CD4-positive, alpha-beta T cell (primary cell): ENCODE measurements at regions of chr15 and their contacts with region 1.

Region 1: GRCh38 chr15:64893481-64894394 is 18.0 kb upstream of the ANKDD1A start:
- DNase-seq: peak; percentile 85 to 98 (median 95)
- ATAC-seq: peak; percentile 65
- H3K4me3 ChIP-seq: peak overlapping the region; percentile 58
- H3K4me3 Mint-ChIP-seq: peak overlapping the region; percentile 86
- H3K27ac ChIP-seq: peak overlapping the region; percentile 97
- H3K27ac Mint-ChIP-seq: peak overlapping the region; percentile 100
- H3K4me1 ChIP-seq: peaks cover 70% of the 10 kb centered on the region
- H3K4me1 Mint-ChIP-seq: peaks cover 62% of the 10 kb centered on the region
- H3K27me3 ChIP-seq: no peaks in the 10 kb centered on the region
- H3K27me3 Mint-ChIP-seq: no peaks in the 10 kb centered on the region
- CTCF ChIP-seq: no peak

Region 2: GRCh38 chr15:64430000-64430735 is 463.6 kb before region 1 on chr15:
- CTCF ChIA-PET with region 1: no interaction called
- POLR2A ChIA-PET with region 1: no interaction called
- intact Hi-C with region 1: loop called in 1 of 2 experiments (anchors 10 kb)
- DNase-seq: peak in 13 of 14 experiments; percentile 17 to 85 (median 37)
- ATAC-seq: peak; percentile 91
- H3K4me3 ChIP-seq: peak overlapping the region; percentile 12
- H3K4me3 Mint-ChIP-seq: peak overlapping the region; percentile 79
- H3K27ac ChIP-seq: peak overlapping the region; percentile 31 to 52
- H3K27ac Mint-ChIP-seq: peak overlapping the region; percentile 97
- H3K4me1 ChIP-seq: peaks cover 36% of the 10 kb centered on the region
- H3K4me1 Mint-ChIP-seq: peaks cover 52% of the 10 kb centered on the region
- H3K27me3 ChIP-seq: no peaks in the 10 kb centered on the region
- H3K27me3 Mint-ChIP-seq: no peaks in the 10 kb centered on the region
- CTCF ChIP-seq: no peak

Region 3: DNA sequence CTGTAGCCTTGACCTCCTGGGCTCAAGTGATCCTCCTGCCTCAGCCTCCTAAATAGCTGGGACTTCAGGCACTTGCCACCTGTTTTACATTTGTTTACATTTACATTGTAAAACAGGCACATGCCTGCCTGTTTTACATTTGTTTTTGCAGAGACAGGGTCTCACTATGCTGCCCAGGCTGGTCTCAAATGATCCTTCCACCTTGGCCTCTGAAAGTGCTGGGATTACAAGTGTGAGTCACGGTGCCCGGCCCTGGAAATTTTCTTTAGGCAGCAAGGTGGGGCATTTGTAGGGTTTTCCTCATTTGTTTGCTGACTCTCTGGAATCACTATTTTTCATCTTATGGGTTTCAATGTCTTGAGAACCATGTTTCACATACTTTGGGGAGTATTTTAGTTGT is 93.3 kb before region 1 on chr15:
- CTCF ChIA-PET with region 1: no interaction called
- POLR2A ChIA-PET with region 1: no interaction called
- intact Hi-C with region 1: no loop called
- DNase-seq: no peak
- ATAC-seq: no peak
- H3K4me3 ChIP-seq: no peak overlapping the region
- H3K4me3 Mint-ChIP-seq: no peak overlapping the region
- H3K27ac ChIP-seq: no peak overlapping the region
- H3K27ac Mint-ChIP-seq: no peak overlapping the region
- H3K4me1 ChIP-seq: peaks cover 5% of the 10 kb centered on the region
- H3K4me1 Mint-ChIP-seq: no peaks in the 10 kb centered on the region
- H3K27me3 ChIP-seq: no peaks in the 10 kb centered on the region
- H3K27me3 Mint-ChIP-seq: no peaks in the 10 kb centered on the region
- CTCF ChIP-seq: no peak

Region 4: DNA sequence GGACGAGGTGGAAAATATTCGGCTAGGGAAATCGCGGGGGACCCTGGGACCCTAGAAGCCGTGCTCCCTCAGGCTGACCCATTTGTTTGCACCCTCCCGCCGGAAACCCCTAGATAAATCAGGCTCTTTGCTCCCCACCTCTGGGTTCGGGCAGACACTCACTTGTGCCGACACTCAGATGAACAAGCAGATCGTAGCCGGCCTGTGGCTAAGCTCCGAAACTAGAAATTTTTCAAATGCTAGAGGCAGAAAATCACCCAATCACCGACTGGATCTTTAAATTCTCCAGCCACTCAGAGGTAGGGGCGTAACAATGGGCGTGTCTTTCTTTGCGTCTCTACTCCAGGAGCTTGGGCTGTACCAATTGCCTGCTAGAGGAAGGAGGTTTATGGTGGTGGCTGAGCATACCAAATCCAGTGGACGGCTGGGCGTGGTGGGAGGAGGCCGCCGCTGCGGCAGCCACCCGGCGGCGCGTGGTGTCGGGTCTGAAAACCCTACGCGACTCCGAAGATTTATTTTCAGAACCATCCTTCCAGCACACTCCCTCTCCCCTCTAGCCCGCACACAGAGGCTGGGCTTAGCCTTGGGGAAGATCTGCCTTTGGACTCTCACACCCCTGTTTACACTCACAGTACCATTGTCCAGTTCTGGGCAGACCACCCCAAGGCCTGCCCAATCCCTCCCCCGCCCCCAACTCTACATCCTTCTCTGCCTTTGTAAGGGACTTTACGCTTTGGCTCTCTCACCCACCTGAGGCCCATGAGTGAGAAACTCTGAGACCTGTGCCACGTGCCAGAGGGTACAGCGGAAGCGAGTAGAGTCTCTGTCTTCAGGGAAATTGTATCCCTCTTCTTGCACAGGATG is 68.1 kb before region 1 on chr15 and contains the start of gene PIF1:
- CTCF ChIA-PET with region 1: interaction called, 7 read pairs
- POLR2A ChIA-PET with region 1: interaction called, 47 read pairs
- intact Hi-C with region 1: loop called in 1 of 2 experiments (anchors 2 kb)
- DNase-seq: peak; percentile 72 to 97 (median 81)
- ATAC-seq: peak; percentile 98
- H3K4me3 ChIP-seq: peak within 1 kb of the TSS; percentile 61
- H3K4me3 Mint-ChIP-seq: peak within 1 kb of the TSS; percentile 86
- H3K27ac ChIP-seq: peak within 1 kb of the TSS in 1 of 2 donors; percentile 9
- H3K27ac Mint-ChIP-seq: peak within 1 kb of the TSS; percentile 61
- H3K4me1 ChIP-seq: peaks cover 37% of the 10 kb centered on the region
- H3K4me1 Mint-ChIP-seq: peaks cover 31% of the 10 kb centered on the region
- H3K27me3 ChIP-seq: peaks cover 5 to 7% of the 10 kb centered on the region in 2 experiments
- H3K27me3 Mint-ChIP-seq: peaks cover 17% of the 10 kb centered on the region
- CTCF ChIP-seq: no peak
- total RNA-seq, gene PIF1: 0.22 to 0.27 TPM

Region 5: GRCh38 chr15:64841258-64842095 is 52.3 kb before region 1 on chr15 and contains the start of gene PLEKHO2:
- CTCF ChIA-PET with region 1: interaction called, 44 read pairs
- POLR2A ChIA-PET with region 1: interaction called, 157 read pairs
- intact Hi-C with region 1: loop called (anchors 1 to 2 kb)
- DNase-seq: peak; percentile 69 to 97 (median 90)
- ATAC-seq: peak; percentile 79
- H3K4me3 ChIP-seq: peak within 1 kb of the TSS; percentile 88
- H3K4me3 Mint-ChIP-seq: peak within 1 kb of the TSS; percentile 96
- H3K27ac ChIP-seq: peak within 1 kb of the TSS; percentile 77 to 83
- H3K27ac Mint-ChIP-seq: peak within 1 kb of the TSS; percentile 83
- H3K4me1 ChIP-seq: peaks cover 82% of the 10 kb centered on the region
- H3K4me1 Mint-ChIP-seq: peaks cover 86% of the 10 kb centered on the region
- H3K27me3 ChIP-seq: no peaks in the 10 kb centered on the region
- H3K27me3 Mint-ChIP-seq: no peaks in the 10 kb centered on the region
- CTCF ChIP-seq: peak; percentile 36
- total RNA-seq, gene PLEKHO2: 5.6 to 5.9 TPM

Region 6: GRCh38 chr15:64856429-64857145 is 37.2 kb before region 1 on chr15:
- CTCF ChIA-PET with region 1: interaction called, 4 read pairs
- POLR2A ChIA-PET with region 1: interaction called, 10 read pairs
- intact Hi-C with region 1: no loop called
- DNase-seq: no peak
- ATAC-seq: no peak
- H3K4me3 ChIP-seq: no peak overlapping the region
- H3K4me3 Mint-ChIP-seq: no peak overlapping the region
- H3K27ac ChIP-seq: no peak overlapping the region
- H3K27ac Mint-ChIP-seq: peak overlapping the region; percentile 68
- H3K4me1 ChIP-seq: peaks cover 63% of the 10 kb centered on the region
- H3K4me1 Mint-ChIP-seq: peaks cover 52% of the 10 kb centered on the region
- H3K27me3 ChIP-seq: no peaks in the 10 kb centered on the region
- H3K27me3 Mint-ChIP-seq: no peaks in the 10 kb centered on the region
- CTCF ChIP-seq: no peak

Region 7: DNA sequence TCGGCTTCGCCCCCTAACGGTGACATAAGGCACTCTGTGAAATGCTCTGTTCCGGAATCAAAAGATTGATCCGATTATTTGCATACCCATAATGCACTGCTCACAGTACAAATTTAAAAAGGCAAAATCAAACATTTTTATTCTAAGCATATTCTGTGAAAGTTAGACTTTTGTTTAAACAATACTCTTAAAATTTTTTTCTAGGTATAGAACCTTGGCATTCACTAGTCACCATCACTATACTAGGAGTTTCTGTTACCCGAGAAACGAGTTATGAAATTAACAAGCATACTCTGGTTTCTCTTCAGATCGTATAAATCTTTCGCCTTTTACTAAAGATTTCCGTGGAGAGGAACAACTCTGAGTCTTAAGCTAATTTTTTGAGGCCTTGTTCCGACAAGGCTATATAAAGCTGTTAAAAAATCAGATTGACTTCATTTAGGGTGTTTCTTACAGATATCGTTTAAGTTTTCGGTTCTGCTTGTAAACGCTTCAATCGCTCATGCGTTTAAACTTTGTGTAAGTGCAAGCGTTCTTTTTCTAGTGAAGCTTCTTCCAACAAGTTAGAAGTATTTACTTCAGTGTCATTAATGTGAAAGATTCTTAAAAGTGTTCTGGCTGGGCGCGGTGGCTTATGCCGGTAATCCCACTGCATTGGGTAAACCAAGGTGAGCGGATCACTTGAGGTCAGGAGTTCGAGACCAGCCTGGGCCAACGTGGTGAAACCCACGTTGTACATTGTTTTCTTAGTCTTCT is 410.8 kb after region 1 on chr15 and contains the start of gene RNU5B-1:
- CTCF ChIA-PET with region 1: no interaction called
- POLR2A ChIA-PET with region 1: interaction called, 10 read pairs
- intact Hi-C with region 1: no loop called
- DNase-seq: peak; percentile 37 to 92 (median 65)
- ATAC-seq: peak; percentile 74
- H3K4me3 ChIP-seq: peak within 1 kb of the TSS; percentile 61
- H3K4me3 Mint-ChIP-seq: peak within 1 kb of the TSS; percentile 93
- H3K27ac ChIP-seq: peak within 1 kb of the TSS; percentile 72 to 93
- H3K27ac Mint-ChIP-seq: peak within 1 kb of the TSS; percentile 100
- H3K4me1 ChIP-seq: peaks cover 26% of the 10 kb centered on the region
- H3K4me1 Mint-ChIP-seq: peaks cover 29% of the 10 kb centered on the region
- H3K27me3 ChIP-seq: no peaks in the 10 kb centered on the region
- H3K27me3 Mint-ChIP-seq: peaks cover 6% of the 10 kb centered on the region
- CTCF ChIP-seq: peak; percentile 96
- total RNA-seq, gene RNU5B-1: 23.7 to 34.8 TPM

Region 8: GRCh38 chr15:65525622-65526021 is 631.9 kb after region 1 on chr15:
- CTCF ChIA-PET with region 1: no interaction called
- POLR2A ChIA-PET with region 1: no interaction called
- intact Hi-C with region 1: no loop called
- DNase-seq: no peak
- ATAC-seq: no peak
- H3K4me3 ChIP-seq: no peak overlapping the region
- H3K4me3 Mint-ChIP-seq: no peak overlapping the region
- H3K27ac ChIP-seq: no peak overlapping the region
- H3K27ac Mint-ChIP-seq: no peak overlapping the region
- H3K4me1 ChIP-seq: peaks cover 8% of the 10 kb centered on the region
- H3K4me1 Mint-ChIP-seq: peaks cover 4% of the 10 kb centered on the region
- H3K27me3 ChIP-seq: no peaks in the 10 kb centered on the region
- H3K27me3 Mint-ChIP-seq: no peaks in the 10 kb centered on the region
- CTCF ChIP-seq: no peak

Region 9: DNA sequence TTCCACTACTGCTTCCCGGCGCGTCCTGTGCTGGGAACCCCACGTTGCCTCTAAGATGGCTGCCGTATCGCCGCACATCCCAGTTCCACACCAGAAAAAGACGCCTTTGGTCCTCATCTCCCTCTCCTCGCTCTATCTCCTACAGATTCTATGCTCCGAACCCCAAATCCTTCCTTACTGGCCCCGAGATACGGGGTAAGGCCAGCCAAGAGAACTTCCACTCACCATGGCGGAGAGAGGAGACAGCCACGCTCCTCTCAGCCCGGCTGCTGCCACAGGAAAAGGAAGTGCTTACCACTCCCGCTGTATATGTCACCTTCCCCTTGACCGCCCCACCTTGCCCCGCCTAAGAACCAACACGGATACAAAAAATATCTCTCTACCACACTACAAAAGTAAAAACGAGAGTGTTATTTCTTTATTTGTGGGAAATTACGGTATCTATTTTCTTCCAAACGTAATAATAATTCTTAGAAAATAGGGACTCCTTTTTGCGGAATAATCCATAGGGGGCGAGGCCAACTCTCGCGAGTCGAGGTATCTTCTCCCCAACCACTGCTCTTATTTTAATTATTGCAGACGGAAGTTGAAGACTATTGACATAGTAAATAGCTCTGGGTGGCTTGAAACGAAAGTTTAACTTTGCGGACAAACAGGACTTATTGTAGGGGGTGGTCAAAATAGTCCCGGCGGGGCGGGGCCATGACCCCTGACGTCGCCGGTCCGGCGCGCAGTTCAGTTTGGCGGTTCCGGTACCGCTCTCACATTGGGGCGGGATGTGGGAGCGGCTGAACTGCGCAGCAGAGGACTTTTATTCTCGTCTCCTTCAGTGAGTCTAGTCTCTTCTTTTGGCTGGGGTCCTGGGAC is 1611.1 kb after region 1 on chr15 and contains the starts of genes RPL4 and ZWILCH:
- CTCF ChIA-PET with region 1: no interaction called
- POLR2A ChIA-PET with region 1: no interaction called
- intact Hi-C with region 1: loop called in 1 of 2 experiments (anchors 5 kb)
- DNase-seq: peak; percentile 69 to 91 (median 77)
- ATAC-seq: peak; percentile 85
- H3K4me3 ChIP-seq: peak within 1 kb of the TSS; percentile 95
- H3K4me3 Mint-ChIP-seq: peak within 1 kb of the TSS; percentile 100
- H3K27ac ChIP-seq: peak within 1 kb of the TSS; percentile 85 to 95
- H3K27ac Mint-ChIP-seq: peak within 1 kb of the TSS; percentile 93
- H3K4me1 ChIP-seq: peaks cover 24% of the 10 kb centered on the region
- H3K4me1 Mint-ChIP-seq: peaks cover 51% of the 10 kb centered on the region
- H3K27me3 ChIP-seq: no peaks in the 10 kb centered on the region
- H3K27me3 Mint-ChIP-seq: no peaks in the 10 kb centered on the region
- CTCF ChIP-seq: no peak
- total RNA-seq, gene RPL4: 4,558 to 4,627 TPM
- total RNA-seq, gene ZWILCH: 6.8 to 7.2 TPM